ENCODE measurements at regions of chr10 and their contacts with region 1.

Region 1: GRCh38 chr10:117320050-117320665 is 55.1 kb downstream of the PDZD8 start:
- DNase-seq: peak; percentile 39 to 68 (median 63)
- H3K4me3 ChIP-seq: no peak overlapping the region
- H3K27ac ChIP-seq: no peak overlapping the region
- H3K4me1 ChIP-seq: peaks cover 0 to 7% (median 5%) of the 10 kb centered on the region in 4 experiments
- H3K27me3 ChIP-seq: no peaks in the 10 kb centered on the region

Region 2: GRCh38 chr10:116926426-116926825 is 393.7 kb before region 1 on chr10:
- CTCF ChIA-PET with region 1: no interaction called
- POLR2A ChIA-PET with region 1: no interaction called
- DNase-seq: no peak
- H3K4me3 ChIP-seq: no peak overlapping the region
- H3K27ac ChIP-seq: no peak overlapping the region
- H3K4me1 ChIP-seq: no peaks in the 10 kb centered on the region
- H3K27me3 ChIP-seq: no peaks in the 10 kb centered on the region

Region 3: GRCh38 chr10:117198088-117198487 is 122.1 kb before region 1 on chr10:
- CTCF ChIA-PET with region 1: no interaction called
- POLR2A ChIA-PET with region 1: no interaction called
- DNase-seq: no peak
- H3K4me3 ChIP-seq: no peak overlapping the region
- H3K27ac ChIP-seq: no peak overlapping the region
- H3K4me1 ChIP-seq: no peaks in the 10 kb centered on the region
- H3K27me3 ChIP-seq: peaks cover 0 to 4% (median 0%) of the 10 kb centered on the region in 5 experiments

Region 4: GRCh38 chr10:117216611-117217195 is 103.5 kb before region 1 on chr10:
- CTCF ChIA-PET with region 1: interaction called, 148 read pairs
- POLR2A ChIA-PET with region 1: interaction called, 8 read pairs
- DNase-seq: peak; percentile 80 to 85 (median 82)
- H3K4me3 ChIP-seq: peak overlapping the region; percentile 19 to 82 (median 67)
- H3K27ac ChIP-seq: no peak overlapping the region
- H3K4me1 ChIP-seq: peaks cover 0 to 16% (median 14%) of the 10 kb centered on the region in 4 experiments
- H3K27me3 ChIP-seq: peaks cover 0 to 40% (median 24%) of the 10 kb centered on the region in 5 experiments

Region 5: DNA sequence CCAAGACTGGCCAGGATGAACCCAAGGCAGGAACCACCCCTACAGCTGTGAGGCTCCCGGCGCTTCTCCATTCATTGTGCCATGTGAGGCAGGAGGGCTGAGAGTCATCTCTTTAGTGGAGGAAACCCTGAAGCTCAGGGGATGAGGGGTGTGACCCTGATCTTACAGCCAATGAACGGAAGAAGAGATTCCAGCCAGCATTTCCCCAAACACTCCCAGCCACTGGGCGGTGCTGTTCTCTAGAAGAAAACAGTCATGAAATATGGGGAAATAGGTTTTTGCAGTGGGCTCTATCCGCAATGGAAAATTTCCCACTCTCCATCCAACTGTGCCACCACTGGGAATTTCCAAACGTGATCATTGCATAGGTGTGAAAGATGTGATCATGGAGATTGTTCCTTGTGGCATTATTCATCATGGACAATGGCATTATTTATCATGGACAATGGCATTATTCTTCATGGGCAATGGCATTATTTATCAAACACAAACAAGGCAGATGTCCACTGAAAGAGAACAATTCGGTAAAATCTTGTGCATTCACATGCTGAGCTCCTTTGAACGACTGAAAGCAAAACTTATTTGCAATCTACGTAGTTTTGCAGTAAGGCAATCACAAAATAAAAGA is 93.2 kb before region 1 on chr10:
- CTCF ChIA-PET with region 1: interaction called, 148 read pairs
- POLR2A ChIA-PET with region 1: no interaction called
- DNase-seq: peak; percentile 69 to 83 (median 79)
- H3K4me3 ChIP-seq: no peak overlapping the region
- H3K27ac ChIP-seq: no peak overlapping the region
- H3K4me1 ChIP-seq: no peaks in the 10 kb centered on the region
- H3K27me3 ChIP-seq: peaks cover 0 to 3% (median 0%) of the 10 kb centered on the region in 5 experiments

Region 6: DNA sequence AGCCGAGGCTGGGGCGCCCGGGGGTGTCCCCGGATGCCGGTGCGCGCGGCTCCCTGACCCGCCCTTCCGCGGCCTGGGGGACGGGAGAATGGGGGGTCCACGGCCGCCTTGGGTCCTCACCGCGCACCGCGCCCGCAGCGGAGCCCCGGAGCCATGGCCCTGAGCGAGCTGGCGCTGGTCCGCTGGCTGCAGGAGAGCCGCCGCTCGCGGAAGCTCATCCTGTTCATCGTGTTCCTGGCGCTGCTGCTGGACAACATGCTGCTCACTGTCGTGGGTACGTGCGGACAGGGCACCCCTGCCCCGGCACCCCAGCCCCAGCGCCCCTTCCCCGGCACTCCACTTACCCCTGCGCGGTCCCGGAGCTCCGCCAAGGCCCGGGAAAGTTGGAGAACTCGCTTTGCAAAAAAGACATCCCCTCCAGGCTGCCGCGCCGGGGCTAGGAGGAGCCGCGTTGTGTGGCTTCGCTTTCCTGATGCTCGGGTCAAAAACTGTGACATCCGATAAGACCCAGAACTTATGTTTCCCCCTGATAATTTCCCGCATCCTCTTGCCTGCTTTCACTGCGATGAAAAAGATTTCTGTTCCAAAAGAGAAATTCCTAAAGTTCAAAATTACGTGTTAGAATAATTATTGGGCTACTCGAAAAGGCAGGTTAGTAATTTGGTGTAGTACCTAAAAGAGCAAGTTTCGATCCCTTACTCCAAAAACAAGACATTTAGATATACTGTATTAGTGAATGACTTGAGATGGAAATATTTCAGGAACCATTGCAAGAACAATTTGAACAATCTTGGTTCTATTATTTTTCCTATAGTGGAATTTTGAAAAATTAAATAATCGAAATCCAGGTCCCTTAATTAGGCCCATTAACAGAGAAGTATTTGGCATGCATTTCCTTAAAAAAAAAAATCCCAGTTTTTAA is 78.4 kb before region 1 on chr10:
- CTCF ChIA-PET with region 1: interaction called, 10 read pairs
- POLR2A ChIA-PET with region 1: no interaction called
- DNase-seq: peak; percentile 60 to 82 (median 67)
- H3K4me3 ChIP-seq: peak overlapping the region; percentile 49 to 76 (median 60)
- H3K27ac ChIP-seq: no peak overlapping the region
- H3K4me1 ChIP-seq: peaks cover 0 to 26% (median 25%) of the 10 kb centered on the region in 4 experiments
- H3K27me3 ChIP-seq: peaks cover 0 to 12% (median 0%) of the 10 kb centered on the region in 5 experiments

Region 7: DNA sequence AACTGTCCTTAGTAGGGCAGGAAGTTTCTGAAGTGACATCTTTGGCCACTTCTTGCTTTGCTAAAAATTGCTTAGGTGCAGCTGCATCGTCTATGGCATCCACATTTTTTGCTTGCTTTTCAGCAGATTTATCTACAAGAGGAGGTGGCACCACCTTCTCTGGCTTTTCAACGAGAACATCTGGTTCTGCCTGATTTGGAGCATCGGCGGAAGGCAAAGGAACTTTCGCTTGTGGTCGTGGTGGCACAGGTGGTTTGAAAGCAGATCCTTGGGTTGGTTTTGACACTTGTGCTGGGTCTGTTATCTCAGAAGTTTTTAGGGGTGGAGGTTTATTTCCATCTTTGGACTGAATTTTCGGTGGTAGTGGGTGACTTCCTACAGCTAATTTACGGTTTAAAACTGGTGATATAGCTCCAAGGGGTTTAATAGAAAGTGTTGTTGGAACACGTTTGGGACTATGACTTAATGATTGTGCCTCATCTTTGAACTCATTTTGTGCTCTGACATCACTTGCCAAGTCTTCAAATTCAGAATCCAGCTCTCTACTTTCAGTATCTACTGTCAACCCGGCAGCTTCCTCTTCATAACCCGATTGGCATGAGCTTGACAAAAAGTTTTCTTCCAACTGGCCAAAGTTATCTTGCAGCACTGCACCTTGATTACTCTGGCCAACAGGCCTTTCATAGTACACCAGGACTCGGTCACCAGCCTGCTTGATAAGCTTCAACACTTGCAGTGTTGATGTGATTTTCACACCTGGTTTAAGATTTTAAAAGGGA is 35.3 kb before region 1 on chr10:
- CTCF ChIA-PET with region 1: interaction called, 24 read pairs
- POLR2A ChIA-PET with region 1: no interaction called
- DNase-seq: peak in 2 of 3 donors; percentile 40 to 61
- H3K4me3 ChIP-seq: no peak overlapping the region
- H3K27ac ChIP-seq: no peak overlapping the region
- H3K4me1 ChIP-seq: no peaks in the 10 kb centered on the region
- H3K27me3 ChIP-seq: no peaks in the 10 kb centered on the region

Region 8: DNA sequence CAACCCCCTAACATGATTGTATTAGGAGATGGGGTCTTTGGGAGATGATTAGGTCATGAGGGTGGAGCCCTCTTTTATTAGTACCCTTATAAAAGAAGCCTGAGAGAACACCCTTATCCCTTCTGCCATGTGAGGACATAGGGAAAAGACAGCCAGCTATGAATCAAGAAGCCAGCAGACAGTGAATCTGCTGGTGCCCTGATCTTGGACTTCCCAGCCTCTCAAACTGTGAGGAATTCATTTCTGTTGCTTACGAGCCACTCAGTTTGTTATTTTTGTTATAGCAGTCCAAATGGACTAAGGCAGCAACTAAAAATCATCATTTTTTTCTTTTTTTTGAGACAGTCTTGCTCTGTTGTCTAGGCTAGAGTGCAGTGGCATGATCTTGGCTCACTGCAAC is 19.5 kb before region 1 on chr10:
- CTCF ChIA-PET with region 1: interaction called, 15 read pairs
- POLR2A ChIA-PET with region 1: no interaction called
- DNase-seq: no peak
- H3K4me3 ChIP-seq: no peak overlapping the region
- H3K27ac ChIP-seq: no peak overlapping the region
- H3K4me1 ChIP-seq: no peaks in the 10 kb centered on the region
- H3K27me3 ChIP-seq: no peaks in the 10 kb centered on the region

Region 9: DNA sequence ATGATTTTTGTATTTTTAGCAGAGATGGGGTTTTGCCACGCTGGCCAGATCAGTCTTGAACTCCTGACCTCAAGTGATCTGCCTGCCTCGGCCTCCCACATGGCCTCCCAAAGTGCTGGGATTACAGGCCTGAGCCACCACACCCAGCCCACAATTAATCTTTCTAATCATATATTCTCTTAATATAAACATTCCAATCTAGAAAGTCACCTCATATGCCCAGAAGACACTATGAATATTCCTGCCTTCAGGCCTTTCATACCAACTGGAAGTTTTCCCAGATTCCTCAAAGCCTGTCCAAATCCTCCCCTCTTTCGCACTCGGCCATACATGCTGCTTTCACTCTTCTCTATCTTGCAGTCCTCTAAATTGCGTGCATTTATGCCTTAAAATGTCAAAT is 22.5 kb after region 1 on chr10:
- CTCF ChIA-PET with region 1: interaction called, 23 read pairs
- POLR2A ChIA-PET with region 1: no interaction called
- DNase-seq: no peak
- H3K4me3 ChIP-seq: peak overlapping the region in 1 of 7 experiments; percentile 19
- H3K27ac ChIP-seq: peak overlapping the region in 1 of 2 experiments; percentile 40
- H3K4me1 ChIP-seq: peaks cover 4 to 46% (median 22%) of the 10 kb centered on the region in 4 experiments
- H3K27me3 ChIP-seq: no peaks in the 10 kb centered on the region

Region 10: DNA sequence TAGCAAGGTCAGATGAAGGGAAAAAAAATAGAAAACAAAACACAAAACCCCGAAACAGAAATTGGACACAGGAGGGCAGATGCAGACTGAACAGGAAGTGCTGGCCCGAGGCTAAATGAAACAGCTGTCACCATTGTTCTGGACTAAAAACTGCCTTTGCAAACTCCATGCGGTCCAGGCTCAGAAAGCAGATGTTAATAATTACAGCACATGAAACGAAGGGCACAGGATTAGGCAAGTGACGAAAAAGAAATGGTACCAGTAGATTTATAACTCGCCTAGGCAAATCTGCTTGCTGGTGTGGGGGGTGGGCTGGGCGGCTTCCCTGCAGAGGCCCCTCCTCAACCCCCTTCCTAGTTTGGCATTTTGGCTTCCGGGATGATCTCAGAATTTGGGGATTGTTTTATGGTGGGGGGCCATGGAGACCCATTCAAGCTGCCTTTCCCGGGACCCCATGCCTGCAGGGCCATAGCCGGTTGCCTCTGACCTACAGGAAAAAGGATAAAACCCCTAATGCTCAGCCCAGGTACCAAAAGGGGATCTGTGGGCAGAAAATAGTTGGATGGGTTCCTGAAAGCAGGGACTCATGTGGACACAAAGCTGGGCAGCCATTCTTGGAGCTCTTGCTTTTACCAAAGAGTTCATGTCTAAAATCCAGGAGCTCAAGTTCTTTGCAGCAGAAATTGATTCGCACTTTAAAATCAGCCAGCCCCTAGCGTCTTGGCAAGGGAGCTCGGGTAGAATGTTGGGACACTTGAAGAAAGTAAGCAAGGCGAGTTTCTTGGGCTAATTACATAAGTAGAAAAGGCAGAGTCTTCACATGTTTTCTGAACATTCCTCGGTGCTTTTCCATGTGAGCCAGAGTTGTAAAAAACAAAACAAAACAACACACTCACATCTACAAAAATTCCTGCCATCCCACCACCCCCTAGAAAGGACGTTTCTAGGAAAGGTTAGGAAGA is 183.4 kb after region 1 on chr10:
- CTCF ChIA-PET with region 1: no interaction called
- POLR2A ChIA-PET with region 1: no interaction called
- DNase-seq: peak in 2 of 3 donors; percentile 6 to 23
- H3K4me3 ChIP-seq: no peak overlapping the region
- H3K27ac ChIP-seq: no peak overlapping the region
- H3K4me1 ChIP-seq: no peaks in the 10 kb centered on the region
- H3K27me3 ChIP-seq: peaks cover 0 to 30% (median 21%) of the 10 kb centered on the region in 5 experiments

Region 11: DNA sequence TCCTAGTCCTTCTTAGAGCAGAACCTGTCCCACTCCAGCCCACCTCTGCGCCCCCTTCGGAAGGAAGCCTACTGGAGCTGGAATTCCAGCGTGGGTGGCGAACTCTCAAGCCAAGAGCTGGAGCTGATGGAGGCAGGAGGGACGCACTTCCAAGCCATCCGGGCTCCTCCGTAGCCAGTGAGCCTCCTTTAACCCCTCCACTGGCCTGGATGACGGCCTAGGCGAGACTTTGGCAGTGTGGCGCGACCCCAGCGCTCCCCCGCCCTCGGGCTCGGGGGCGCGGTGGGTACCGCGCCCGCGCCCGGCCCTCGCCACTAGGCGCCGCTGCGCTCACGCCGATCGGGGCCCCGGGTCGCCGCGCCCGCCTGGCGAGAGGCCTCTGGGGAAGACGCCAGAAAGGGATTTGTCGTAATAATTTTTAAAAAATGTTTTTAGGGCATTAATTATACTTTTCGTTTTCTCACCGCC is 217.3 kb after region 1 on chr10:
- CTCF ChIA-PET with region 1: no interaction called
- POLR2A ChIA-PET with region 1: no interaction called
- DNase-seq: peak in 2 of 3 donors; percentile 56 to 66
- H3K4me3 ChIP-seq: peak overlapping the region in 1 of 7 experiments; percentile 28
- H3K27ac ChIP-seq: no peak overlapping the region
- H3K4me1 ChIP-seq: peaks cover 0 to 41% (median 25%) of the 10 kb centered on the region in 4 experiments
- H3K27me3 ChIP-seq: peaks cover 17 to 100% (median 74%) of the 10 kb centered on the region in 5 experiments

Measured in common myeloid progenitor, CD34-positive (primary cell).